ENCODE measurements at regions of chr12 and their contacts with region 1.

Region 1: DNA sequence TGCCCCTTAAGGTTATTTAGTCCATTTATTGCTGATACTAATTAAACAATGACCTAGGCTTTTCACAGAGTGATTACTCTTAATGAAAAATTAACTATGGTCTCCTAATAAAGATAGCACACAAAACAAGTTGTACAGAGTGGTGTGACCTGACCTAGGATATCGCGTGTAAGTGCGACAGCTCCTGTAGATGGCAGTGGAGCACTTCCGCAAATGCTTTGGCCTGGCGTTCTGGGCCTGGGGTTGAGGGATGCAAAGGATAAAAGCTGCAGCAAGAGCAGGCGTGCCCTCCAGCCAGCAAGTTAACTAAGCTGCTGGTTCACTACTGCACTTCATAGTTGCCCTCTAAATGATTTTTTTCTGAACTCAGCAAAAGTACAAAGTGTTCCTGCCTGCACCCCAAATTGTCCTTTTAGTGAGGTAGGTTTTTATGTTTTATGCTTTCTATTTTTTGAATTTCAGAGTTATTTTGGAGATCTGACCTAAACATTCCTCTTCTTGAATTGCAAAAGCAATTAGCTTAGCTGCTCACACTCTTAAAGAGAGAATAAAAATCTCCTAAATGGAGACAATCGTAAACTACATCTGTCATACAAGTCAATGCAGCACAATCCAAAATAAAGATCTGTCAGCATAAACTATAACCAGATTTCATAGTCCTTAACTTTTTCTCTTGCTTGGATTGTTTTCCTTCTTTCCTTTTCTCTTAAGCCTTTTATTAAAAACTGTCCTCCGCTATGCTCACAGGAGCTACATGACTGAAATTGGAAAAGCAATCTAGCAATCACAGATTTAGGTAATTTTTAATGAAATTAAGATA is 379.6 kb downstream of the LRIG3 start:
- DNase-seq: peak; percentile 83
- H3K4me3 ChIP-seq: no peak overlapping the region
- H3K4me3 Mint-ChIP-seq: no peak overlapping the region
- H3K27ac Mint-ChIP-seq: no peak overlapping the region
- H3K4me1 ChIP-seq: peaks cover 31% of the 10 kb centered on the region
- H3K4me1 Mint-ChIP-seq: peaks cover 28% of the 10 kb centered on the region
- H3K27me3 ChIP-seq: no peaks in the 10 kb centered on the region
- H3K27me3 Mint-ChIP-seq: no peaks in the 10 kb centered on the region
- CTCF ChIP-seq: peak; percentile 72 to 86

Region 2: DNA sequence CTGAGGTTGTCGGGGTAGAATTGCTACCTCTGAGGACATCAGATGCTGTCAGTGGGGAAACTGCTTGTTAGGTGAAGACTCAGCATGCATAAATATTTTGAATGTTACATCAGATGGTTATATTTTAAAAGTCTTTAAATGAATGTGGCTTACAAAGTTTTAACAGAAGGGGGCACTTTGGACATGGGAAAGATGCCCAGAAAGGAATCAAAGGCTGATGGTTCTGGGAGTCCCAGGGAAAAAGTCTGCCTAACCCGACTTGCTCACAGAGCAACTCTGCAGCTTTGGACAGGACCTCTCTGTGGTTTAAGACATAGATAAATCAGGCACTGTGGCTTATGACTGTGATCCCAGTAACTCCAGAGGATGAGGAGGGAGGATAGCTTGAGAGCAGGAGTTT is 124.5 kb before region 1 on chr12:
- CTCF ChIA-PET with region 1: no interaction called
- POLR2A ChIA-PET with region 1: no interaction called
- intact Hi-C with region 1: loop called (anchors 1 kb)
- DNase-seq: no peak
- H3K4me3 ChIP-seq: no peak overlapping the region
- H3K4me3 Mint-ChIP-seq: no peak overlapping the region
- H3K27ac Mint-ChIP-seq: peak overlapping the region; percentile 64
- H3K4me1 ChIP-seq: peaks cover 49% of the 10 kb centered on the region
- H3K4me1 Mint-ChIP-seq: peaks cover 54% of the 10 kb centered on the region
- H3K27me3 ChIP-seq: no peaks in the 10 kb centered on the region
- H3K27me3 Mint-ChIP-seq: no peaks in the 10 kb centered on the region
- CTCF ChIP-seq: peak in 1 of 2 experiments; percentile 2

Region 3: DNA sequence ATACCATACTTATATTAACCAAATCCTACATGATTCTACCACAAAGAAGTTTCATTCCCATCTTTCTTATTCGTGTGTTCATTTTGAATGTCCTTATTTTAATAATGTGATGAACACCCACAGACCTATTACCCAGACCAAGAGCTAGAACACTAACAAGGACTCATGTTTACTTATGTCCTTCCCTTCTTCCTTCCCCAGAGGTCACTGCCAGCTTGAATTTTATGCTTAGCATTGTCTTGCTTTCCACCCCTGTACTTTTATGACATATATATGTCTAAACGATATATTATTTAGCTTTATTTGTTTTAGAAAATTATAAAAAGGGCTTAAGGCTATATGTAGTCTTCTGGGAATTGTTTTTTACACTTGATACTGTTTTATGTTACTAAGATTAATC is 141.0 kb after region 1 on chr12:
- CTCF ChIA-PET with region 1: no interaction called
- POLR2A ChIA-PET with region 1: no interaction called
- intact Hi-C with region 1: loop called (anchors 1 kb)
- DNase-seq: no peak
- H3K4me3 ChIP-seq: no peak overlapping the region
- H3K4me3 Mint-ChIP-seq: no peak overlapping the region
- H3K27ac Mint-ChIP-seq: no peak overlapping the region
- H3K4me1 ChIP-seq: no peaks in the 10 kb centered on the region
- H3K4me1 Mint-ChIP-seq: no peaks in the 10 kb centered on the region
- H3K27me3 ChIP-seq: no peaks in the 10 kb centered on the region
- H3K27me3 Mint-ChIP-seq: no peaks in the 10 kb centered on the region
- CTCF ChIP-seq: peak in 1 of 2 experiments; percentile 20

Region 4: DNA sequence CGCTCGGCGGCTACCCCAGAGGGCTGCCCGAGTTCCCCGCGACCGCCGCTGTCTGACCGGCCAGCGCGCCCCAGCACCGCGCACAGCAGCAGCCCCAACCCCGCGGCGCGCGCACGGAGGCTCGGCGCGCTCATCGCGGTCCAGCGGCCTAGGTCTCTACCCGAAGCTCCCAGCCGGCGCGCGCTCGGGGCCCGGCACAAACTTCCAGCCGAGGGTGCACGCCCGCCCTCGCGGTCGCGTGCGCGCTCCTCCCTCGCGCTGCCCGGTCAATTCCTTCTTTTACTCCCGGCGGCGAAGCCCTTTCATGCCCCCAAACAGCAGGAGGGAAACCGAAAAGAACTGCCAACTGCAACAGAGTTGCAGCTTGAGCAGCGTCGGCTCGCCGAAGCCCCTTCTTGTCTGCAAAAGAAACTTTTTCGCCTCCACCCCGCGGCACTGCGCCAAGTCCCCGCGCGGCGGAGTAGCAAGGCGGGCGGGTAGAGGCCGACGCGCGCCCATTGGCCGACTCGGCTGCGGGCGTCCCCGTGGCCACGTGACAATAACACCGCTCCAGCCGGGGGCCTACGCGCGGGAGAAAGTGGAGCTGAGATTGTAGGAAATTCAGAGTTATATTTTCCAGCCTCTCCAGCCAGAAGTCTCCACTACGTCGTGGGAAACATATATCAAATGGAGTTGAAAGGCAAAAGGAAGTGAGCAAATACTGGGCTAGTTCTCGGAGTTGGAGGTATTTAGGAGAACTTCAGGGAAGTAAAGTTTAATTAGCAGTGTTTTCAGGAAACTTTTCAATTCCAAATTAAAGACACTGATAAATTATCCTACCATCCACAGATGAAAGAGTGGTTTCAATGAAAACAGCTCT is 379.6 kb after region 1 on chr12 and contains the start of gene LRIG3:
- CTCF ChIA-PET with region 1: interaction called, 5 read pairs
- POLR2A ChIA-PET with region 1: no interaction called
- intact Hi-C with region 1: loop called (anchors 5 kb)
- DNase-seq: peak; percentile 81 to 88
- H3K4me3 ChIP-seq: peak within 1 kb of the TSS; percentile 59
- H3K4me3 Mint-ChIP-seq: peak within 1 kb of the TSS; percentile 91
- H3K27ac Mint-ChIP-seq: peak within 1 kb of the TSS; percentile 82
- H3K4me1 ChIP-seq: peaks cover 36% of the 10 kb centered on the region
- H3K4me1 Mint-ChIP-seq: peaks cover 38% of the 10 kb centered on the region
- H3K27me3 ChIP-seq: no peaks in the 10 kb centered on the region
- H3K27me3 Mint-ChIP-seq: no peaks in the 10 kb centered on the region
- CTCF ChIP-seq: peak in 1 of 2 experiments; percentile 24
- total RNA-seq, gene LRIG3: 19.1 and 19.8 TPM in 2 replicates

Region 5: GRCh38 chr12:59113831-59114615 is 573.3 kb after region 1 on chr12:
- CTCF ChIA-PET with region 1: no interaction called
- POLR2A ChIA-PET with region 1: no interaction called
- intact Hi-C with region 1: loop called (anchors 1 kb)
- DNase-seq: peak; percentile 74 to 80
- H3K4me3 ChIP-seq: no peak overlapping the region
- H3K4me3 Mint-ChIP-seq: no peak overlapping the region
- H3K27ac Mint-ChIP-seq: no peak overlapping the region
- H3K4me1 ChIP-seq: no peaks in the 10 kb centered on the region
- H3K4me1 Mint-ChIP-seq: no peaks in the 10 kb centered on the region
- H3K27me3 ChIP-seq: no peaks in the 10 kb centered on the region
- H3K27me3 Mint-ChIP-seq: no peaks in the 10 kb centered on the region
- CTCF ChIP-seq: peak; percentile 88 to 89

Region 6: DNA sequence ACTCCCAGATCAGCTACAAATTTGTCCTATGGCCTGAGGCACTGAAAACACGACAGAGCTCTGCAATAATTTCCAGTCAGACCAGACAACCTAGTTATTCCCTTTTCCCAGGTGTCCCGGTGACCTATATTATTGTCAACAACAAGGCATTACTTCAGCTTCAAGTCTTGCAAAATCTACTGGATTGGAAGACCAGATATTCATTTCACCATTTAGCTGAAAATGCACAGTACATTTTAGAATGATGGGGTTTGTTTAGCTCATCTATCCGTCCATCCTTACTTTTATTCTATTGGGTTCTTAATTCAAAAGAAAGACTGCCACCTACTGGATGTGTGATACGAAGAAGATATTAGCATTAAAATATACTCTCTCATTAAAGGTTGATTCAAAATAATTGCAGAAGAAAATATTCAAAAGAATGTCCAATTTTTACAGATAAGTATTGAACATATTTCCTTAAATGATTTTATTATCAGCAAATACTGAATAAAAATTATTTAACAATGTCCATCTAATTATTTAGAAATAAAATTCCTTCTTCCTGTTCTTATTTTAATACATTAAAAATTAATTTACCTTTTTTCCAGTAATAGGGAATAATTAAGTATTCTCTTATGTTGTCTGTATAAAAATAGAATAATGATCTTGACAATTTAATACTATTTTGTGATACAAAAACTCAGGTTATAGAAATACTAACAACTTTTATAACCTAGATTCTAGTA is 624.5 kb after region 1 on chr12:
- CTCF ChIA-PET with region 1: interaction called, 3 read pairs
- POLR2A ChIA-PET with region 1: no interaction called
- intact Hi-C with region 1: loop called (anchors 5 kb)
- DNase-seq: peak in 1 of 2 experiments; percentile 32
- H3K4me3 ChIP-seq: no peak overlapping the region
- H3K4me3 Mint-ChIP-seq: no peak overlapping the region
- H3K27ac Mint-ChIP-seq: no peak overlapping the region
- H3K4me1 ChIP-seq: peaks cover 19% of the 10 kb centered on the region
- H3K4me1 Mint-ChIP-seq: peaks cover 14% of the 10 kb centered on the region
- H3K27me3 ChIP-seq: no peaks in the 10 kb centered on the region
- H3K27me3 Mint-ChIP-seq: no peaks in the 10 kb centered on the region
- CTCF ChIP-seq: peak in 1 of 2 experiments; percentile 31